CD4-positive, alpha-beta memory T cell (primary cell): ENCODE measurements at regions of chr7 and their contacts with region 1.

Region 1: GRCh38 chr7:128387216-128388144 is 22.3 kb downstream of the IMPDH1 start:
- DNase-seq: peak in 4 of 5 donors; percentile 48 to 56 (median 51)
- H3K4me3 ChIP-seq: no peak overlapping the region
- H3K4me3 Mint-ChIP-seq: no peak overlapping the region
- H3K27ac ChIP-seq: no peak overlapping the region
- H3K27ac Mint-ChIP-seq: no peak overlapping the region
- H3K4me1 ChIP-seq: no peaks in the 10 kb centered on the region
- H3K4me1 Mint-ChIP-seq: peaks cover 0 to 4% (median under 1%) of the 10 kb centered on the region in 4 donors
- H3K27me3 ChIP-seq: no peaks in the 10 kb centered on the region
- H3K27me3 Mint-ChIP-seq: no peaks in the 10 kb centered on the region

Region 2: GRCh38 chr7:128299109-128299607 is 88.3 kb before region 1 on chr7:
- CTCF ChIA-PET with region 1: no interaction called
- POLR2A ChIA-PET with region 1: no interaction called
- intact Hi-C with region 1: no loop called
- DNase-seq: no peak
- H3K4me3 ChIP-seq: no peak overlapping the region
- H3K4me3 Mint-ChIP-seq: no peak overlapping the region
- H3K27ac ChIP-seq: no peak overlapping the region
- H3K27ac Mint-ChIP-seq: no peak overlapping the region
- H3K4me1 ChIP-seq: no peaks in the 10 kb centered on the region
- H3K4me1 Mint-ChIP-seq: no peaks in the 10 kb centered on the region
- H3K27me3 ChIP-seq: no peaks in the 10 kb centered on the region
- H3K27me3 Mint-ChIP-seq: no peaks in the 10 kb centered on the region

Region 3: GRCh38 chr7:128373606-128374005 is 13.9 kb before region 1 on chr7:
- CTCF ChIA-PET with region 1: interaction called, 10 read pairs
- POLR2A ChIA-PET with region 1: no interaction called
- intact Hi-C with region 1: no loop called
- DNase-seq: no peak
- H3K4me3 ChIP-seq: no peak overlapping the region
- H3K4me3 Mint-ChIP-seq: no peak overlapping the region
- H3K27ac ChIP-seq: no peak overlapping the region
- H3K27ac Mint-ChIP-seq: no peak overlapping the region
- H3K4me1 ChIP-seq: no peaks in the 10 kb centered on the region
- H3K4me1 Mint-ChIP-seq: no peaks in the 10 kb centered on the region
- H3K27me3 ChIP-seq: no peaks in the 10 kb centered on the region
- H3K27me3 Mint-ChIP-seq: peaks cover 3 to 6% of the 10 kb centered on the region in 2 donors

Region 4: DNA sequence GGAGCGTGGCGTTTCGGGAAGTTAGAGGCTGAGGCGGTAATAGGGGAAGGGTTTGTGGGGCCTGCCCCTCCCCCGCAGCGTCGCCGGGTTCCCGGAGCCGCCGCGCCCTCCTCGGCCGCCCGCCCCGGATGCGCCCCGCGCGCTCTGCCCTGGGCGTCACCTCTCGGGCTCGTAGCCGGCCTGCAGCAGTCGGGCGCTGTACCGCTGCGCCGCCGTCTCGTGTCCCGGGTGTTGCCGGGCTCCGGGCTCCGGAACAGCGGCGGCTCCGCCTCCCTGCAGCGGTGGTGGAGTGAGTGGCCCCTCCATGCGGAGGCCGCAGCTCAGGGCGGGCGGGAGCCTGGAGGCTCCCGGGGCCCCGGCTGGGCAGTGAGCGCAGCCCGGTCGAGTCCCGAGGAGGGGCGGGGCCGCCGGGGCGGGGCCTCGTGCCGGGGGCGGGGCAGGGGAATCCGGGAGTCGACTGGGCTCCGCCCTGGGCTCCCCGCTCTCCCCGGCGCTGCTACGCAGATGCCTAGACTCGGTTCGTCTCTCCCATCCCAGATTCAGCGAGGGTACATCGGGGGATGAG is 22.2 kb after region 1 on chr7 and contains the start of gene IMPDH1:
- CTCF ChIA-PET with region 1: interaction called, 12 read pairs
- POLR2A ChIA-PET with region 1: no interaction called
- intact Hi-C with region 1: no loop called
- DNase-seq: peak; percentile 83 to 91 (median 85)
- H3K4me3 ChIP-seq: peak within 1 kb of the TSS; percentile 68 to 92
- H3K4me3 Mint-ChIP-seq: peak within 1 kb of the TSS; percentile 90 to 96 (median 92)
- H3K27ac ChIP-seq: peak within 1 kb of the TSS; percentile 85
- H3K27ac Mint-ChIP-seq: peak within 1 kb of the TSS; percentile 86 to 95 (median 94)
- H3K4me1 ChIP-seq: peaks cover 45% of the 10 kb centered on the region
- H3K4me1 Mint-ChIP-seq: peaks cover 22 to 43% (median 32%) of the 10 kb centered on the region in 4 donors
- H3K27me3 ChIP-seq: no peaks in the 10 kb centered on the region
- H3K27me3 Mint-ChIP-seq: no peaks in the 10 kb centered on the region
- total RNA-seq, gene IMPDH1: 48.0 to 49.4 TPM